ENCODE measurements at regions of chr6 and their contacts with region 1.

Region 1: DNA sequence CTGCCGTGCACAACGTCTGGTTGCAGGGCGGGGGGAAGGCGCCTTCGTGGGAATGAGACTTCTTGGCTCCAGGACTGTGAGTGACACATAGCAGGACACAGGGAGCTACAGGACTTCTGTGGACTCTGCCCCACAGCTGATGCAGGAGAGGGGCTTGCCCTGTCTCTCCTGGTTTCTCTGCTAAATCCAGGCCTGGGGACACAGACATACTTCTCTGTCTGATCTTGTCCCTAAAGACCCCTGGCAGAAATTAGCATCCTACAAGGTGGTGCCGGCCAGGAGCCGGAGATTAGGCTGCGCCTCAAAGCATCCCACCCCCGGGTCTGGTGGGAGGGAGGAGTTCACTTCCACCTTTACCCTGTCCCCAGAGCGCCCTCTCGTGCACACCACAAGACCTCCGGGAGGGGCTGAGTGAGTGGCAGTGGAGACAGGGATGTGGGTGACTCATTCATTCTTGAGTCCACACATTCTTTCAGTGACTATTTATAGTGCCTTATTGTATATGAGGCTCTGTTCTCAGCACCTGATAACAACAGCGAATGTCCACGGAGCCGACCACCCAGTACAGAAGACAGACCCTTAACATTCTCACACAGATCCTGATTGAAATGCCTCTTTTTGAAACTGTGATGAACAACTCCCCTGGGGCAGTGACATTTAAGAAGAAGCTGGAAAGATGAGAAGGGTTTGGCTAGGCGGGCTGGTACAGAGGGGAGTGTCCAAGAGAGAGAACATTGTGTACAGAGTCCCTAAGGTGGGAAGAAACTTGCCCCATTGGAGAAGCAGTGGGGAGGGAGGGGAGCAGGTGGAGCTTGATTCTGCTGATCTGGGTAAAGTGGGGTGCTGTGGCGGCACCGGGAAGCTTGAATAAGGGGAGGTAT is 39.0 kb downstream of the GMPR start:
- DNase-seq: peak; percentile 77
- ATAC-seq: peak; percentile 90

Region 2: GRCh38 chr6:16228709-16229665 is 48.4 kb before region 1 on chr6:
- intact Hi-C with region 1: loop called (anchors 10 kb)
- DNase-seq: no peak
- ATAC-seq: peak; percentile 53

Region 3: GRCh38 chr6:16238057-16238962 is 39.0 kb before region 1 on chr6 and contains the start of gene GMPR:
- intact Hi-C with region 1: loop called (anchors 1 kb)
- DNase-seq: peak; percentile 93
- ATAC-seq: peak; percentile 88
- total RNA-seq, gene GMPR: 125 TPM

Region 4: GRCh38 chr6:16244869-16245451 is 32.4 kb before region 1 on chr6:
- intact Hi-C with region 1: loop called (anchors 1 kb)
- DNase-seq: no peak
- ATAC-seq: peak; percentile 65

Measured in Right ventricle myocardium inferior (tissue), 1 donor.